ENCODE measurements at regions of chr4 and their contacts with region 1.

Region 1: GRCh38 chr4:173538148-173538908 is 8.3 kb upstream of the HAND2 start:
- DNase-seq: no peak
- H3K4me3 Mint-ChIP-seq: peak overlapping the region; percentile 33
- H3K27ac Mint-ChIP-seq: no peak overlapping the region
- H3K4me1 Mint-ChIP-seq: peaks cover 4% of the 10 kb centered on the region
- H3K27me3 Mint-ChIP-seq: peaks cover 75% of the 10 kb centered on the region

Region 2: DNA sequence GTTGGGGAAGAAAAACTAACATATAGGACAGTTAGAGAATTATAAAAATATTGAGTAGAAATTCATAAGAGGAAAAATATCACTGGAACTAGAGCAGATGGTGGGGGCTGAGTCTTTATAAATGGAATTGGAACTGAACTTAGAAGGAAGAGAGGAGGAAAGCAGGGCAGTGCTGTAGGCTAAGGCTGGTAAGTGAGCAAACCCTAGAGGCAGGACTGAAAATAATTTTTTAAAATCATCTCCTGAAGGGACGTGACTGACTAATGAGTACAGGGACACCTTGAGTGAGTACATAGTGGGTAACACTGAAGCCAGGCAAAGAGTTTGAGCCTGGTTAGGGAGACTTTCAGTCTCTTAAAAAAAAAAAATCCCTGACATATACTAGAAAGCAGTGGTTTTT is 306.4 kb before region 1 on chr4:
- intact Hi-C with region 1: no loop called
- DNase-seq: no peak
- H3K4me3 Mint-ChIP-seq: no peak overlapping the region
- H3K27ac Mint-ChIP-seq: no peak overlapping the region
- H3K4me1 Mint-ChIP-seq: peaks cover under 1% of the 10 kb centered on the region
- H3K27me3 Mint-ChIP-seq: no peaks in the 10 kb centered on the region

Region 3: GRCh38 chr4:173500841-173501591 is 37.3 kb before region 1 on chr4:
- intact Hi-C with region 1: loop called (anchors 5 kb)
- DNase-seq: no peak
- H3K4me3 Mint-ChIP-seq: no peak overlapping the region
- H3K27ac Mint-ChIP-seq: no peak overlapping the region
- H3K4me1 Mint-ChIP-seq: peaks cover 2% of the 10 kb centered on the region
- H3K27me3 Mint-ChIP-seq: peaks cover 63% of the 10 kb centered on the region

Region 4: GRCh38 chr4:173652283-173652931 is 114.1 kb after region 1 on chr4:
- intact Hi-C with region 1: no loop called
- DNase-seq: no peak
- H3K4me3 Mint-ChIP-seq: no peak overlapping the region
- H3K27ac Mint-ChIP-seq: no peak overlapping the region
- H3K4me1 Mint-ChIP-seq: no peaks in the 10 kb centered on the region
- H3K27me3 Mint-ChIP-seq: no peaks in the 10 kb centered on the region